Activated CD8-positive, alpha-beta T cell treated with anti-CD3 and anti-CD28 coated beads for 36 hours (primary cell): ENCODE measurements at regions of chr18 and their contacts with region 1.

Region 1: GRCh38 chr18:62982600-62983251 is 267.4 kb downstream of the PHLPP1 start:
- DNase-seq: peak; percentile 69
- ATAC-seq: peak; percentile 71
- H3K4me3 Mint-ChIP-seq: no peak overlapping the region
- H3K27ac Mint-ChIP-seq: no peak overlapping the region
- H3K4me1 Mint-ChIP-seq: no peaks in the 10 kb centered on the region
- H3K27me3 Mint-ChIP-seq: no peaks in the 10 kb centered on the region
- CTCF ChIP-seq: peak; percentile 85

Region 2: DNA sequence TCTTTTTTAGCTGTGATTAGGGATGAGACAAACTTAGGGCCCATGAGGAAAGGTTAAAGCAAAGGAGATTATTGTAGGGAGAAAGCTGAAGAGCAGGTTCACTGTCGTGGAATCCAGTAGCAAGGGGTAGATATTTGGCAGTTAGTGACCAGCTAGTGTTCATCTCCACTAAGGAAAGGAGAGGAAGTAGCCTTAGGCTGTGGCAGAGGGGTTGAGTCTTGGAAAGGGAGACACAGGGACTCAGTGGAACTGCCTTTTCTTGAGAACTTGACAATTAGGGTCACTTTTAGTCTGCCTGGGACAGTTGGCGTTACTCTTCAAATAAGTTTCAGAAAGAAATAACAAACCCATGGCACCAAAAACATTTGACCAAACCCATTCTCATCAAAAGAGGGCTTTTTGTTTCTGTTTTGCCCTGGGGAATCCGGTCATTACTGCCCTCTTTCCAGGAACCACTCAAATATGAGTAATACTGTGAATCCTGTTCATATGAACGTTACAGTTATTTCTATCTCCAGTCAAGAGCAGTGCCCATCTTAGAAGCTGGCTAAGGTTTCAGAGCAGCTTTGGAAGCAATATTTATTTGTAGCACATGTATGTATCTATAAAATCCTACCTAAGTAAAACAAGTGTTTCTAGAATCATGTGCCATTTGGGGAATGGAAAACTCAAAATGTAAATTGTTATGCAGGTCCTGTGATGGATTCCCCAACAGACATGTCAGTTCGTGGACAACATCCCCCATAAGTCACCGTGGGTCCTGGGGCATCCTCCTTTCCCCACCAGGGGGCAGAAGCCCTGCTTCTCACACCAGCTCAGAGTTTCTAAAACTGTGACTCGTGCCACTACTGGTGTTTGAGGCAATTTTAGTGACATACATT is 344.7 kb before region 1 on chr18:
- CTCF ChIA-PET with region 1: interaction called, 31 read pairs
- POLR2A ChIA-PET with region 1: no interaction called
- intact Hi-C with region 1: no loop called
- DNase-seq: peak; percentile 78
- ATAC-seq: peak; percentile 83
- H3K4me3 Mint-ChIP-seq: no peak overlapping the region
- H3K27ac Mint-ChIP-seq: no peak overlapping the region
- H3K4me1 Mint-ChIP-seq: peaks cover 7% of the 10 kb centered on the region
- H3K27me3 Mint-ChIP-seq: peaks cover 13% of the 10 kb centered on the region
- CTCF ChIP-seq: no peak

Region 3: GRCh38 chr18:62957885-62958472 is 24.7 kb before region 1 on chr18:
- CTCF ChIA-PET with region 1: interaction called, 11 read pairs
- POLR2A ChIA-PET with region 1: no interaction called
- intact Hi-C with region 1: no loop called
- DNase-seq: peak; percentile 75
- ATAC-seq: peak; percentile 82
- H3K4me3 Mint-ChIP-seq: no peak overlapping the region
- H3K27ac Mint-ChIP-seq: no peak overlapping the region
- H3K4me1 Mint-ChIP-seq: peaks cover 8% of the 10 kb centered on the region
- H3K27me3 Mint-ChIP-seq: no peaks in the 10 kb centered on the region
- CTCF ChIP-seq: peak; percentile 61

Region 4: GRCh38 chr18:62963507-62963906 is 19.2 kb before region 1 on chr18:
- CTCF ChIA-PET with region 1: interaction called, 11 read pairs
- POLR2A ChIA-PET with region 1: no interaction called
- intact Hi-C with region 1: no loop called
- DNase-seq: no peak
- ATAC-seq: no peak
- H3K4me3 Mint-ChIP-seq: no peak overlapping the region
- H3K27ac Mint-ChIP-seq: no peak overlapping the region
- H3K4me1 Mint-ChIP-seq: no peaks in the 10 kb centered on the region
- H3K27me3 Mint-ChIP-seq: no peaks in the 10 kb centered on the region
- CTCF ChIP-seq: no peak